ENCODE measurements at regions of chr1 and their contacts with region 1.

Region 1: GRCh38 chr1:156383023-156383422 is 14.0 kb downstream of the RHBG start:
- DNase-seq: peak; percentile 58 to 79 (median 77)
- ATAC-seq: peak; percentile 79 to 86
- H3K4me3 ChIP-seq: no peak overlapping the region
- H3K27ac ChIP-seq: no peak overlapping the region
- H3K4me1 ChIP-seq: no peaks in the 10 kb centered on the region
- H3K27me3 ChIP-seq: no peaks in the 10 kb centered on the region

Region 2: GRCh38 chr1:156212833-156213643 is 170.0 kb before region 1 on chr1 and contains the start of gene PMF1:
- intact Hi-C with region 1: no loop called
- DNase-seq: peak; percentile 97 to 99 (median 98)
- ATAC-seq: peak; percentile 98
- H3K4me3 ChIP-seq: peak within 1 kb of the TSS; percentile 30
- H3K27ac ChIP-seq: peak within 1 kb of the TSS; percentile 93
- H3K4me1 ChIP-seq: peaks cover 2% of the 10 kb centered on the region
- H3K27me3 ChIP-seq: no peaks in the 10 kb centered on the region
- total RNA-seq, gene PMF1: 55.3 to 62.9 (median 59.5) TPM

Region 3: DNA sequence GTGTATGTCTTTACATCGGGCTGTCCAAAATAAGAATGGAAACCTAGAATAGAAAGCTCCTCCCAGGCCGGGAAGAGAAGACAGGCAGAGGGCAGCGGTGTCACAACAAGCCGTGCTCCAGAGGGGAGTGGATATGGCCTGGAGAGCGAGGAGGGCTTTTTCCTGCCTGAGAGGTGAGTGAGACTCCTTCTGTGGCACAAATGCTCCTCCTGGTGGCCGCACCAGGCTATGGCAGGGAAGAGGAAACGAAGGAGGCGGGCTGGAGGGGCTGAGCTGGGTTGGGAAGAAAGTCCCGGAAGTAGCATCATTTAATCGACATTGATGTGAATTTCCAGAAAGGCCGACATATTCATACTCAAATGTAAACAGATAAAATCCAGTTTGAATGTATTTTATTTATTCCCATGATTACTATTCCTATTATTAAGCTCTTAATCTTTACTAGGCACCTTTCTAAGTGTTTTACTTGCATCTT is 62.8 kb after region 1 on chr1:
- intact Hi-C with region 1: loop called (anchors 1 to 5 kb)
- DNase-seq: peak; percentile 81 to 91 (median 89)
- ATAC-seq: peak; percentile 92 to 94
- H3K4me3 ChIP-seq: no peak overlapping the region
- H3K27ac ChIP-seq: no peak overlapping the region
- H3K4me1 ChIP-seq: no peaks in the 10 kb centered on the region
- H3K27me3 ChIP-seq: no peaks in the 10 kb centered on the region

Region 4: GRCh38 chr1:156601122-156601830 is 218.3 kb after region 1 on chr1 and contains the start of gene GPATCH4:
- intact Hi-C with region 1: loop called in 2 of 4 experiments (anchors 5 to 10 kb)
- DNase-seq: peak; percentile 86 to 90 (median 86)
- ATAC-seq: peak; percentile 88 to 90
- H3K4me3 ChIP-seq: peak within 1 kb of the TSS; percentile 94
- H3K27ac ChIP-seq: peak within 1 kb of the TSS; percentile 77
- H3K4me1 ChIP-seq: peaks cover 4% of the 10 kb centered on the region
- H3K27me3 ChIP-seq: no peaks in the 10 kb centered on the region
- total RNA-seq, gene GPATCH4: 13.4 to 21.6 (median 14.5) TPM

Region 5: GRCh38 chr1:156608036-156608674 is 225.1 kb after region 1 on chr1:
- intact Hi-C with region 1: loop called in 3 of 4 experiments (anchors 5 to 10 kb)
- DNase-seq: no peak
- ATAC-seq: peak; percentile 90
- H3K4me3 ChIP-seq: no peak overlapping the region
- H3K27ac ChIP-seq: no peak overlapping the region
- H3K4me1 ChIP-seq: peaks cover 2% of the 10 kb centered on the region
- H3K27me3 ChIP-seq: no peaks in the 10 kb centered on the region

Region 6: GRCh38 chr1:156618853-156619581 is 236.0 kb after region 1 on chr1 and contains the start of gene HAPLN2:
- intact Hi-C with region 1: loop called in 1 of 4 experiments (anchors 10 kb)
- DNase-seq: no peak
- ATAC-seq: no peak
- H3K4me3 ChIP-seq: no peak within 1 kb of the TSS
- H3K27ac ChIP-seq: no peak within 1 kb of the TSS
- H3K4me1 ChIP-seq: peaks cover 4% of the 10 kb centered on the region
- H3K27me3 ChIP-seq: no peaks in the 10 kb centered on the region
- total RNA-seq, gene HAPLN2: 0.53 to 1.2 (median 1.1) TPM

Region 7: DNA sequence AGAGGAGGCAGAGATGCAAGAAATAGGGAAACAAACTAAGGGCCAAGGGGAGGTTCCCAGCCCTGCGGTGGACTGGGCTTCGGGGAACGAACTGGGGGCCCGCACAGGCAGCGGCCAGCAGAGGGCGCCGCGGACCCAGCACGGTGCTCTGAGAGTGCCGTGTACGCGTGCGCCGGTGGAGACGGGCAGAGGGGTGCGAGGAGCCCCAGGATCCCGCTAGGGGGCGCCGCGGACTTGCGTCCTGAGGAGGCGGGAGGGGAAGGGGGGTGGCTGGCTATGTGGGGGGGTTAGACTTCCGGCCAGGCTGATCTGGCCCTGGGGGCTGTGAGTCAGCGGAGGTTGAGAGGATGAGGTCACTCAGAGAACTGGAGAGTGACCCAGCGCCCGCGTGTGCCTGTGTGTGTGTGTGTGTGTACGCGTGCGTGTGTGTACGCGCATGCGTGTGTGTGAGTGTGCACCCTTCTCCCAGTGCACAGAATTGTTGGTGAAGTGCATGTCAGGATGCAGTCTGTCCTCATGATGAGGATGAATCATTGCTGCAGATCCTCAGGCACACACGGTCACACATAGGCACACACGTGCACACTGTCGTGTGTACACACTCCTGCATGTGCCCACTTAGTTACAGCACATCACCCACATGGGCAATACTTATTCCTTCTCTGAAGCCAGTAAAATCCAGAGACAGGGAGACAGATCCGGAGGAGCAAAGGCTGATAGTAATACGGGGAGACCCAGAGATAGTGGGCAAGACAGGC is 277.1 kb after region 1 on chr1:
- intact Hi-C with region 1: loop called in 1 of 4 experiments (anchors 10 kb)
- DNase-seq: peak; percentile 98 to 99 (median 98)
- ATAC-seq: peak; percentile 86 to 88
- H3K4me3 ChIP-seq: no peak overlapping the region
- H3K27ac ChIP-seq: peak overlapping the region; percentile 90
- H3K4me1 ChIP-seq: peaks cover 43% of the 10 kb centered on the region
- H3K27me3 ChIP-seq: no peaks in the 10 kb centered on the region